Astrocyte of the cerebellum (primary cell): ENCODE measurements at regions of chr2 and their contacts with region 1.

Region 1: DNA sequence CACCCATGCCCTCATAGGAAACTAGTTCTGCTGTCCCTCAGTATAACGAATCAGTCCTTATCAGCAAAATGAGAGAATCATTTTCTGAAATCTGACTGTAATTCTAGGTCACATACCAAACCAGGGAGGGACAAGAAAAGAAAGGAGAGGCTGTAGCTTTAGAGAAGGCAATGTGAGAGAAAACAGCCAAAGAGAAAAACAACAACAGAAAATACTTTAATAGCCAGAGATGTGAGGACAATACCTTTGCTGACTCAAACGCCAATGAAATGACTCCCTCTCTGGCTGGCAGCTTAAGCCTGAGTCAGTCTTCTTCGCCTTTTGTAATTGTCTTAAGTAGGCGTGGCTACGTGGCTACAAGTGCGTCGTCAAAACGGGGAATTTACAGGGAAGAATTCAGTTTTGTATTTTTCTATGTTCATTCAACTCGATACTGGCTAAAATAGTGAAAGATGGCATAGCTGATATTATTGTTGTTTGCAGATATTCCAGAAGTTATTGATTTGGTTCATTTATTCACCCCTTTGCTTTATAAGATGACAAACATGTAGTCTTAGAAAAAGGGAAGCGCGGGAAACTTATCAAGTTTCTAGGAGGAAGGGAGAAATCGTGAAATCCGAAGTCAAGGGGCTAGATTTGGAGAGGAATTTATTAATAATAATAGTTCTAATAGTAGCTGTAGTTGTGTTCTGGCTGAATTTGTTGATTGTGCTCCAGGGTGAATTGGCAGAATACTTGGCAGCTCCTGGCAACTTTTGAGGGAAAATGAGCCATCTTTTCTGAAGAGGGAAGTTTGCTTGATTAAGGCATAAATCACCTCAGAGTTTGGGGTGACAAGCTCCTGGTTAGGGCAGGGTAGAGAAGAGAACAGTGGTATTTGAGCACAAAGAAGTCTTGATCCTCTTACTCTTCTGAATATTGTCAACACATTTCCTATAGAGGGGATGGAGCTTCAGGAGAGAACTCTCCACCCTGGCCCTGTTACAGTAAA is at the start of gene IL1A:
- DNase-seq: peak; percentile 29
- H3K4me3 ChIP-seq: no peak within 1 kb of the TSS
- CTCF ChIP-seq: no peak

Region 2: DNA sequence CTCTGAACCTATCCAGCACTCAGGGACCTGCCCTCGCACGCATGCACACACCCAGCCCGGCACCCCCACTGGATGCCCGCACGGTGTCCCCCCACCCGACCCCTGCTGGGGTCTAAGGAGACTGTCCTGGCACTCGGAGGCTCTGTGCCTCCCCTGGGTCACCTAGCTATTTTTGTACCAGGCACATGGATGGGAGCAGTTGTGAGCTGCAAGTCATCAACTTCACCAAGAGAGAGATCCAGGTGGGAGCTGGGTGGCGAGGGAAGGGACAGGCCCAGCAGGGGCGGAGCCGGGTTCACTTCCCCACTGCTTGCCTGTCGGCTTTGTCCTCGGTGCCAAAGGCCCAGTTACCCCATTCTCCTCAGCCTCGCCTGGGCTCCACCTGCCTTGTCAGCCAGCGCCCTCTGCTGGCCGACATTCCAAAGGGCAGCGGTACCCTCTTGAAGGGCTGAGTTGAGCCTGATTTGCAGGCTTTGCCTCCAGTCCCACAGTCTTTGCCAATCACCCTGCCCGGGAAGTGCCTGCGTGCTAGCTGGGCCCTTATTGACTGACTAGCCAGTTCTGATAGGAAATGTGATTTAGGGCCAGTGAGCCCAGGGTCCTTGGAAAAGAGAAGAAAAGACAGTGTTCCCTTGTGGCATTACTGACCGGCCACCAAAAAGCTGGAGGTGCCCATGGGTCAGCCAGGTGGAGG is 57.9 kb before region 1 on chr2:
- in situ Hi-C with region 1: no loop called
- DNase-seq: peak; percentile 64
- H3K4me3 ChIP-seq: no peak overlapping the region
- CTCF ChIP-seq: peak; percentile 97

Region 3: DNA sequence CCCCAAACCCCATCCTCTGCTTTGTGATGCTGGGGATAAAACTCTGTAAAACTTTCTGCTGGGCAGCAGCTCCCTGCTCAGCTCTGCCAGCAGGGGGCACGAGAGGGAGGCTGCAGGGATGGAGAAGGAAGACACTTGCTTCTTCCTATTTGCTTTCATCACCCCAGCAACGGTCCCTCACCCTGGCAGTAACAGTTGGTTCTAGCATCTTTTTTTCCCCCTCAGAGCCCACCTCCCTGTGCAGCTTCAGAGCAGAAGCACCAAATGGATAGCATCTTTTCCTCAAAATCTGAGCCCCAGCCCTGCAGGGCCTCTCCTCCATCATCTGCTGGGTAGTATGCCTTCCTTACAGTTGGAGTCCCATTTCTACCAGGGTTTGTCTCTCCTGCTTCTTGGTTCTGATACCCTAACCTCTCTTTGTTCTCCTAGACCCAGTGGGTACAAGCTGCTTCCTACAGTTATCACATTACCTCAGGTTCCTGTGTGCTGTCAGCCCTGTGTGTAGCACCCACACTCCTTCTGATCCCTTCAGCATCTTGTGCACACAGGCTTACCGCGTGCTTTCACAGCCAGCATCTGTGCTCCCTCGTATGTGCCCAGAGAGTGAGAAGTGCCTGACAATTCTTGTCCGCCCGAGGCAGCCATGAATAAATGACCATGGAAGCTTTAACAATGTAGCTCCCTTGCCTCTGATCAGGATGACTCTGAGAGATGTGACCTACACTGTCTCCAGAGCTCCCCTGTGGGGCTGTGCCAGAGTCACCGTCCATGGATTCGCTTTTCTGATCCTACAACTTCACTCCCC is 34.5 kb before region 1 on chr2:
- in situ Hi-C with region 1: loop called (anchors 5 kb)
- DNase-seq: peak; percentile 60
- H3K4me3 ChIP-seq: no peak overlapping the region
- CTCF ChIP-seq: peak; percentile 98

Region 4: DNA sequence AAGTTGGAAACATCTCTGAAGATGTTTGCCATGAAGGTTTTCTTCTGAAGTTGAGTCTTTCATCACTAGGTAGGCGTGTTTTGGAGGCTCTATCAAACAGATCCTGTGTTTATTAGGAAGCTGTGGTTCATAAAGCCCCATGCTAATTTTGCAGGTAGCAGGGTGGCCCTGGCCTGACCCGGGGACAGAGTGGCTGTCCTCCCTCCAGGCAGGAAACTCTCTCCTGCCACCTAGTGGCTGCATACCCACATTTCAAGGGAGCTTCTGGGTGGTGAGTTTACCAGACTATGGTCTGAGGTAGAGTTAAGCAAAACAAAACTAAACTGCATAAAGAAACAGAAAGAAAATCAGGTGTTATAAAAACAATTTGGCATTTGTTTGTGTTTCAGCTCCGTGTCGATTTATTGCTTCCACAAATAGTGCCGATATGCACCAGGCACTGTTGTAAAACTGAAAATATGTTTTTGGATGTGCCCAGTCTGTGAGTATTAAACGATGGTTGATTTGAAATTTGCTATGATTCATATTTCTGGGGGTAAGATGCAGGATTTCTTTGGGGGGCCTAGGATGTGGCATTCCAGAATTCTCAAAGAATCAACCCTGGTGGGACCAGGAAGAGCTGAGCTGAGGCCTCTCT is 100.5 kb after region 1 on chr2:
- in situ Hi-C with region 1: no loop called
- DNase-seq: no peak
- H3K4me3 ChIP-seq: no peak overlapping the region
- CTCF ChIP-seq: peak; percentile 35